Panc1 (cell line): ENCODE measurements at regions of chr11 and their contacts with region 1.

Region 1: GRCh38 chr11:62905927-62906531 is 15.1 kb downstream of the CHRM1 start:
- DNase-seq: peak; percentile 73
- ATAC-seq: peak; percentile 93
- H3K4me3 ChIP-seq: no peak overlapping the region
- H3K27ac ChIP-seq: no peak overlapping the region
- H3K4me1 ChIP-seq: no peaks in the 10 kb centered on the region
- H3K27me3 ChIP-seq: no peaks in the 10 kb centered on the region
- CTCF ChIP-seq: peak; percentile 98

Region 2: GRCh38 chr11:63017306-63017974 is 111.4 kb after region 1 on chr11:
- CTCF ChIA-PET with region 1: interaction called, 31 read pairs
- POLR2A ChIA-PET with region 1: interaction called, 10 read pairs
- in situ Hi-C with region 1: no loop called
- intact Hi-C with region 1: no loop called
- DNase-seq: no peak
- ATAC-seq: no peak
- H3K4me3 ChIP-seq: no peak overlapping the region
- H3K27ac ChIP-seq: no peak overlapping the region
- H3K4me1 ChIP-seq: peaks cover 10% of the 10 kb centered on the region
- H3K27me3 ChIP-seq: no peaks in the 10 kb centered on the region; the same call in 1 of the 2 replicates
- CTCF ChIP-seq: no peak

Region 3: GRCh38 chr11:63023841-63024648 is 118.0 kb after region 1 on chr11:
- CTCF ChIA-PET with region 1: interaction called, 31 read pairs
- POLR2A ChIA-PET with region 1: no interaction called
- in situ Hi-C with region 1: no loop called
- intact Hi-C with region 1: loop called (anchors 1 kb)
- DNase-seq: peak; percentile 39
- ATAC-seq: peak; percentile 92
- H3K4me3 ChIP-seq: no peak overlapping the region
- H3K27ac ChIP-seq: no peak overlapping the region
- H3K4me1 ChIP-seq: no peaks in the 10 kb centered on the region
- H3K27me3 ChIP-seq: no peaks in the 10 kb centered on the region; the same call in 1 of the 2 replicates
- CTCF ChIP-seq: peak; percentile 98

Region 4: DNA sequence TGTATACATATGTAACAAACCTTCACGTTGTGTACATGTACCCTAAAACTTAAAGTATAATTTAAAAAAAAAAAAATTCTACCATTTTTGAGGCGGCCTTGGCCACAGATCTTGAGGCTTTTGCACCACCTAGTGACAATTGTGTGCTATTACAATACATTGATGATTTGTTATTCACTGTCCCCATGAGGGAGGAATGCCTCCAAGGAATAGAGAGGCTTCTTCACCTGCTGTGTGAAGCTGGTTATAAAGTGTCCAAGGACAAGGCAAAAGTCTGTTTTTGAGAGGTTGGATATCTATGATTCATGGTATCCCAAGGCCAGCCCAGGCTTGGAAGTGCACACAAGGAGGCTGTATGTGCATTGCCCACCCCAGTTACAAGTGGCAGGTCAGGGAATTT is 306.7 kb after region 1 on chr11:
- CTCF ChIA-PET with region 1: interaction called, 3 read pairs
- POLR2A ChIA-PET with region 1: no interaction called
- in situ Hi-C with region 1: no loop called
- intact Hi-C with region 1: loop called (anchors 5 kb)
- DNase-seq: no peak
- ATAC-seq: peak; percentile 70
- H3K4me3 ChIP-seq: no peak overlapping the region
- H3K27ac ChIP-seq: no peak overlapping the region
- H3K4me1 ChIP-seq: no peaks in the 10 kb centered on the region
- H3K27me3 ChIP-seq: peaks cover 4% of the 10 kb centered on the region; the same call in 1 of the 2 replicates
- CTCF ChIP-seq: peak; percentile 80